SK-N-SH (cell line): ENCODE measurements at regions of chr10 and their contacts with region 1.

Region 1: DNA sequence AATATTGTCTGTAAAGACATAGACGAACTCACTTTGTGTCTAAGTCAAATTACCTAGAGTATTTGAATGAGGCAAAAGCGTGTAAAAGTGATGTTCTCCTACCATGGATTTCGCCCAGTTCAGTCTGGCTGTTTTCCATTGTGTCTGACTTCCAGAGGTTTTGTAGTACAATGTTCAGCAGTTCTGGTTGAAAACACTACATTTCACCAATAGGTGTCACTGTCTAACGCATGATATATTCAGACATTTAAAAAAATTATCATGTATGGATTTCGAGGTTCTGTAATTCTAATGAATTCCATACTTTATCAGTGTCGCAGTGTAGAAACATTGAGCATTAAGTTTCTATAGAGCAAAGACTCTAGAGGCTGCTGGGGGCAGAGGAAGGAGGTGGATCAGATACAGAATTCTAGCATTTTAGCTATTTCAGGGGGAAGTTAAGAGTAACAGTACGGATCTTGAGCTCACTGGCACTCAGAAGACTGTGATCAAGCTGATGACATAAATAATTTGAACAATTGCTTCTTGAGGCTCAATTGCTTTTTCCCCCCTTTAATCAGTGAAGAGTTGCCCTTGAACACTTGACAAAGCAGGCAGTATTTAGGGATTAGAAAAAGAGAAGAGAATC is 196.9 kb upstream of the RHOBTB1 start:
- DNase-seq: peak; percentile 24
- H3K4me3 ChIP-seq: no peak overlapping the region; a peak in 1 of 4 replicates
- H3K27ac ChIP-seq: no peak overlapping the region
- H3K4me1 ChIP-seq: peaks cover 0 to 10% of the 10 kb centered on the region in 2 experiments; a peak in 1 of 4 replicates
- H3K27me3 ChIP-seq: no peaks in the 10 kb centered on the region
- CTCF ChIP-seq: peak; percentile 83
- EP300 ChIP-seq: no peak
- RAD21 ChIP-seq: peak; percentile 85

Region 2: DNA sequence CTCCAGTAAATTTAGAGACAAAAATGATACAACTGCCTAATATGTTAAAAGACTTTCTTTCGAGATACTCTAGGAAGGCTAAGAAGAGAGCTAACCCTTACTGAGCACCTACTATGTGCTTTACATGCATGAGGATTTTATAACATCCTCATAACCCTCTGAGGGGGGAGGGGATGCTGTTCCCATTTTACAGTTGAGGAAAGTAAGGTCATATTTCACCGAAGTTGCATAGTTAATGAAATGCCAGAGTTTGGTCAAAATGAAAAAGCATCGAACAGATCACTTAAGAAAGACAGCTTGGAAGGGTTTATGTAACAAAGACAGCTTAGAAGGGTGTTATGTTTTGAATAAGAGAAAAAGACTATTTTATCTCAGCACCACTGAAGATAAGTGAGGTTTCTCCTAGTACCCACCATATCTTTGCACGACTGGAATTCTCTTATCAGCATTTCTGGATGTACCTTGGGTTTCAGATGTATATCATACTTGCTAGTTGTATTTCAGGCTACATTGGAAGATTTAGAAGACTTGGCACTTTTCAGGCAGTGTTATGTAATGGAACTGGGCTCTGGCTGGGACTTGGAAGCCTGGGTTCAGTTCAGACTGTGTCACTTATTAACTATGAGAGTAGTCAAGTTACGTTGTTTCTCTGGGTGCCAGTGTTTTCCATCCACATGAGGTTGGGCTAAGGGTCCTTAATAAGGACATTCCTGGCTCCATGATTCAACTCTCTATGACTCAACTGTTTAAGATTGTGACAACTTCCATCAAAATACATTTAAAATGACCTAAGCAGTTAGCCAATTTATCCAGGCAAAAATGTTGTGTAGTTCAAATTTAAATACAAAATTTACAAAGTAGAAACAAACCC is 202.9 kb before region 1 on chr10:
- CTCF ChIA-PET with region 1: no interaction called
- POLR2A ChIA-PET with region 1: no interaction called
- DNase-seq: no peak
- H3K4me3 ChIP-seq: no peak overlapping the region
- H3K27ac ChIP-seq: peak overlapping the region in 1 of 2 experiments; percentile 37; a peak in 1 of 4 replicates
- H3K4me1 ChIP-seq: peaks cover 7% of the 10 kb centered on the region in 2 experiments; a peak in 1 of 4 replicates
- H3K27me3 ChIP-seq: no peaks in the 10 kb centered on the region
- CTCF ChIP-seq: no peak
- EP300 ChIP-seq: no peak; a peak in 1 of 4 replicates
- RAD21 ChIP-seq: no peak

Region 3: GRCh38 chr10:61125560-61126170 is 15.2 kb before region 1 on chr10:
- CTCF ChIA-PET with region 1: interaction called, 14 read pairs
- POLR2A ChIA-PET with region 1: no interaction called
- DNase-seq: no peak
- H3K4me3 ChIP-seq: no peak overlapping the region
- H3K27ac ChIP-seq: no peak overlapping the region
- H3K4me1 ChIP-seq: no peaks in the 10 kb centered on the region
- H3K27me3 ChIP-seq: no peaks in the 10 kb centered on the region
- CTCF ChIP-seq: no peak
- EP300 ChIP-seq: peak in 1 of 2 experiments; percentile 18; a peak in 1 of 4 replicates
- RAD21 ChIP-seq: no peak

Region 4: GRCh38 chr10:61153771-61154170 is 12.9 kb after region 1 on chr10:
- CTCF ChIA-PET with region 1: interaction called, 15 read pairs
- POLR2A ChIA-PET with region 1: no interaction called
- DNase-seq: no peak
- H3K4me3 ChIP-seq: no peak overlapping the region
- H3K27ac ChIP-seq: no peak overlapping the region
- H3K4me1 ChIP-seq: no peaks in the 10 kb centered on the region; a peak in 1 of 4 replicates
- H3K27me3 ChIP-seq: no peaks in the 10 kb centered on the region
- CTCF ChIP-seq: no peak
- EP300 ChIP-seq: no peak
- RAD21 ChIP-seq: no peak

Region 5: GRCh38 chr10:61189912-61190311 is 49.0 kb after region 1 on chr10:
- CTCF ChIA-PET with region 1: interaction called, 23 read pairs
- POLR2A ChIA-PET with region 1: no interaction called
- DNase-seq: no peak
- H3K4me3 ChIP-seq: no peak overlapping the region
- H3K27ac ChIP-seq: no peak overlapping the region
- H3K4me1 ChIP-seq: no peaks in the 10 kb centered on the region; a peak in 1 of 4 replicates
- H3K27me3 ChIP-seq: no peaks in the 10 kb centered on the region
- CTCF ChIP-seq: no peak
- EP300 ChIP-seq: no peak
- RAD21 ChIP-seq: no peak